K562 (cell line): ENCODE measurements at regions of chr16 and their contacts with region 1.

Region 1: DNA sequence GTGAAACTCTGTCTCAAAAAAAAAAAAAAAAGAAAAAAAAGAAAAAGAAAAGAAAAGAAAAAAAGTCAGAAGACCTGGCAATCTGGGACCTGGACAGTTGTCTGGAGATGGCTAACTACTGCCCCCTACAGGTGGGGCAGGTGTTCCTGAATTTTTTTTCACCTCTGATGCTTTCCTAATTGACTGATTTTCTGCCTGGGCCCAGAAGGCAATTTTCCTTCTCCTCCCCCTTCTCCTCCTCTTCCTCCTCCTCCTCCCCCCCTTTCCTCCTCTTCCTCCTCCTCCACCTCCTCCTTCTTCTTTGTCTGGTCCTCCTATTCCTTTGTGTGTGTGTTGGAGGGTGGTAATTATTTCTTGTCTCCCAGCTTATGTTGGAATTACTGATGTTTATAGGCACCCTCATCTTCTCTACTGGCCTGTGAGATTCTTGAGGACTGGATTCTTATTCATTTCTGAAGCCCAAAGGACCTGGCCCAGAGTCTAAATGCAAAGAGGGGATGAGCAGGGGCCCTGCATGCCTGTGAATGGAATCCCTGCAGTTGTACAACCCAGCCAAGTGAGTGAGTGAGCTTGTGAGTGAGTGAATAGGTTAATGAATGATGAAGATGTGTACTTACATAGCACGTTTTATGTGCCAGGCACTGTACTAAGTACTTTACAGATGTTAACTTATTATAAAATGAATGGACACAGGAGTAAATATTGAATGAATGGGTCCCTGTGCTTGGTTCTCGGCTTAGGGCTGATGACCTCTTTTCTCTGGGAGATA is 26.9 kb downstream of the IRX5 start:
- DNase-seq: peak; percentile 70 to 78 (median 75)
- ATAC-seq: peak; percentile 82
- H3K4me3 ChIP-seq: no peak overlapping the region
- H3K27ac ChIP-seq: no peak overlapping the region
- H3K4me1 ChIP-seq: no peaks in the 10 kb centered on the region
- H3K27me3 ChIP-seq: peaks cover 0 to 13% of the 10 kb centered on the region in 2 experiments; a peak in 2 of 5 replicates
- CTCF ChIP-seq: peak; percentile 60 to 84 (median 71)
- EP300 ChIP-seq: no peak
- POLR2A ChIP-seq: no peak
- RAD21 ChIP-seq: peak; percentile 57 to 71

Region 2: GRCh38 chr16:53945996-53946395 is 1011.6 kb before region 1 on chr16:
- CTCF ChIA-PET with region 1: interaction called, 4 read pairs
- POLR2A ChIA-PET with region 1: no interaction called
- in situ Hi-C with region 1: no loop called
- intact Hi-C with region 1: loop called (anchors 1 kb)
- DNase-seq: peak; percentile 30 to 54 (median 41)
- ATAC-seq: peak; percentile 82; the same call in 2 of the 3 replicates
- H3K4me3 ChIP-seq: no peak overlapping the region
- H3K27ac ChIP-seq: no peak overlapping the region
- H3K4me1 ChIP-seq: no peaks in the 10 kb centered on the region
- H3K27me3 ChIP-seq: no peaks in the 10 kb centered on the region
- CTCF ChIP-seq: peak; percentile 47 to 90 (median 71)
- EP300 ChIP-seq: no peak
- POLR2A ChIP-seq: no peak
- RAD21 ChIP-seq: peak; percentile 72 to 77

Region 3: GRCh38 chr16:54282202-54282927 is 675.2 kb before region 1 on chr16:
- CTCF ChIA-PET with region 1: no interaction called
- POLR2A ChIA-PET with region 1: no interaction called
- in situ Hi-C with region 1: no loop called
- intact Hi-C with region 1: loop called (anchors 2 kb)
- DNase-seq: peak; percentile 51 to 73 (median 70)
- ATAC-seq: peak; percentile 95
- H3K4me3 ChIP-seq: no peak overlapping the region
- H3K27ac ChIP-seq: no peak overlapping the region
- H3K4me1 ChIP-seq: peaks cover 0 to 9% of the 10 kb centered on the region in 2 experiments; a peak in 2 of 5 replicates
- H3K27me3 ChIP-seq: peaks cover 5 to 26% of the 10 kb centered on the region in 2 experiments; a peak in 3 of 5 replicates
- CTCF ChIP-seq: peak; percentile 44 to 57 (median 53); a peak in 3 of 6 replicates
- EP300 ChIP-seq: no peak
- POLR2A ChIP-seq: no peak
- RAD21 ChIP-seq: peak; percentile 10 to 24; a peak in 1 of 4 replicates

Region 4: GRCh38 chr16:54459509-54460262 is 497.9 kb before region 1 on chr16:
- CTCF ChIA-PET with region 1: no interaction called
- POLR2A ChIA-PET with region 1: no interaction called
- in situ Hi-C with region 1: no loop called
- intact Hi-C with region 1: no loop called
- DNase-seq: no peak
- ATAC-seq: no peak
- H3K4me3 ChIP-seq: no peak overlapping the region
- H3K27ac ChIP-seq: no peak overlapping the region
- H3K4me1 ChIP-seq: no peaks in the 10 kb centered on the region; a peak in 1 of 5 replicates
- H3K27me3 ChIP-seq: peaks cover 0 to 4% of the 10 kb centered on the region in 2 experiments; a peak in 1 of 5 replicates
- CTCF ChIP-seq: no peak
- EP300 ChIP-seq: no peak
- POLR2A ChIP-seq: no peak
- RAD21 ChIP-seq: no peak

Region 5: DNA sequence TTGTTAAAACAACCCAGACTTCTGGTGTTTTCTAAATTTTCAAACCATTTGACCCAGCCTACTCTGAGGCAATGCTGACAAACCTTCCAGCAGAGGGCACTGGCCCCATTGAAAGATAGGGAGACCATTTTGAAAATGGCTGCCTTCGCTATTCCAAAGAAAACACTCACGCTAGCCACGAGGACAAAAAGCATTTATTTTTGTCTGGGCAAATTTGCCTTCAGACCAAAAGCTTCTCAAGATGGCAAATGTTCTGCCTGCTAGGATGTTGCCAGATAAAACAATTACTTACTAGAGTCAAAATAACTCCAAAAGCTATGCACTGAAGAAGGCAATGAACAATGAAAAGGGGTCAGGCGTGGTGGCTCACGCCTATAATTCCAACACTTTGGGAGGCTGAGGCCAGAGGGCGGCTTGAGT is 323.6 kb before region 1 on chr16:
- CTCF ChIA-PET with region 1: interaction called, 3 read pairs
- POLR2A ChIA-PET with region 1: no interaction called
- in situ Hi-C with region 1: loop called (anchors 5 kb)
- intact Hi-C with region 1: loop called (anchors 5 kb)
- DNase-seq: peak; percentile 38 to 49 (median 48)
- ATAC-seq: peak; percentile 91
- H3K4me3 ChIP-seq: no peak overlapping the region
- H3K27ac ChIP-seq: no peak overlapping the region
- H3K4me1 ChIP-seq: no peaks in the 10 kb centered on the region
- H3K27me3 ChIP-seq: peaks cover 0 to 4% of the 10 kb centered on the region in 2 experiments; a peak in 1 of 5 replicates
- CTCF ChIP-seq: peak; percentile 52 to 67 (median 66)
- EP300 ChIP-seq: no peak
- POLR2A ChIP-seq: no peak
- RAD21 ChIP-seq: peak; percentile 57 to 67

Region 6: GRCh38 chr16:54822492-54822891 is 135.1 kb before region 1 on chr16:
- CTCF ChIA-PET with region 1: interaction called, 8 read pairs
- POLR2A ChIA-PET with region 1: no interaction called
- in situ Hi-C with region 1: no loop called
- intact Hi-C with region 1: loop called (anchors 10 kb)
- DNase-seq: no peak
- ATAC-seq: no peak
- H3K4me3 ChIP-seq: no peak overlapping the region
- H3K27ac ChIP-seq: no peak overlapping the region
- H3K4me1 ChIP-seq: no peaks in the 10 kb centered on the region
- H3K27me3 ChIP-seq: peaks cover 8 to 20% of the 10 kb centered on the region in 2 experiments; a peak in 4 of 5 replicates
- CTCF ChIP-seq: no peak
- EP300 ChIP-seq: no peak
- POLR2A ChIP-seq: no peak
- RAD21 ChIP-seq: no peak

Region 7: DNA sequence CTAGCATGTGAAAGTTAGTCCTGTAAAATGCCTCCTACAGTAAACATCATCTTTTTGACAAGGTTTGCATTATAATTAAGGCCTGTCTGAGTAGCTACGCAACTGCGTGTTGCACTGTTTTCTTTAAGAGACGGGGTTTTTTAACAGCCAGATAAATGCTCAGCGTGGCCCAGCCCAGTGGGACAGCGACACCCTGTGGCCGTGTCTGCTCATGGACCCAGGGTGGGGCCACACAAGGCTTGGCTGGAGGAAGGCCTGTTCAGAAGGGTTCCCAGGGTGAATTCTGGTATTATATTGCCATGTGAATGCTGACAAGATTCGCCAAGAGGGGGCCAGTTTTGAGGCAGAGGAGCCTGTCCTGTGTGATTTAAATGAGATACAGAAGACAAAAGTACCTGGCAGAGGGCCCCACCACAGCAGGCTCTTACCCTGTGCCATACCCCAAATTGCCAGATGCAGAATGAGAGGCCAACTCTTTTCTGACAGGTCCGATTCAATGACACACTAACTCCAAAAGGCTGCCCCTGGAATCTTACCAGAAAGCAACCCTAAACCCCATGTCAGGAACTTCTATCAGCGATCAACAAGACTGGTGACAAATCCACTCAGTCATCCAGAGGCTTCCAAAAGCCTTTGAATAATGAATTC is 300.5 kb after region 1 on chr16:
- CTCF ChIA-PET with region 1: no interaction called
- POLR2A ChIA-PET with region 1: no interaction called
- in situ Hi-C with region 1: no loop called
- intact Hi-C with region 1: loop called (anchors 5 kb)
- DNase-seq: peak; percentile 68 to 81 (median 74)
- ATAC-seq: peak; percentile 97
- H3K4me3 ChIP-seq: no peak overlapping the region
- H3K27ac ChIP-seq: no peak overlapping the region
- H3K4me1 ChIP-seq: no peaks in the 10 kb centered on the region; a peak in 1 of 5 replicates
- H3K27me3 ChIP-seq: peaks cover 2 to 4% of the 10 kb centered on the region in 2 experiments; a peak in 1 of 5 replicates
- CTCF ChIP-seq: peak; percentile 81 to 87 (median 85)
- EP300 ChIP-seq: no peak
- POLR2A ChIP-seq: no peak
- RAD21 ChIP-seq: peak; percentile 74 to 82